Heart left ventricle (tissue), 16 donors: ENCODE measurements at regions of chr10 and their contacts with region 1.

Region 1: GRCh38 chr10:87861953-87862678 is 1.2 kb downstream of the KLLN start:
- DNase-seq: peak; percentile 97 to 98 (median 98)
- ATAC-seq: peak; percentile 88 to 92 (median 91)
- H3K4me3 ChIP-seq: peak overlapping the region; percentile 63 to 95 (median 80)
- H3K27ac ChIP-seq: peak overlapping the region; percentile 95 to 99 (median 97)
- H3K4me1 ChIP-seq: peaks cover 0 to 24% (median 14%) of the 10 kb centered on the region in 12 donors
- H3K27me3 ChIP-seq: no peaks in the 10 kb centered on the region
- CTCF ChIP-seq: no peak
- POLR2A ChIP-seq: peak in 1 of 2 donors; percentile 58

Region 2: DNA sequence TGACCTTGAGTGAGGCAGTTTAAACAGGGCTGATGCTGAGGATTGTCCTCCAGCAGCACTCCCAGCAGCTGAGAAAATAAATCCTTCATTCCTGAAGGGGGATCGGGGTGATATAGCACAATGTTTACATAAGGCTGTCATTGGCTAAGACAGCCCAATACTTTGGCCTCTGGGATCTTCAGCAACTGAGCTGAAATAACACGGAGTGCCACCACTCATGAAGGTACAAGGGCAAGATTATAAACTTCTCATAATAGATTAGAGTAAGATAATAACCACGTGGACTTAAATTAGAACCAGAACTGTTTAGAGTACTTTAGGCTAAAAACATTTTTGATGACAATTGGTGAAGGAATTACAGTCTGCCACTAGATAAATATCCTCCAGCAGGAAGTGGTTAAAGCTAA is 272.5 kb before region 1 on chr10:
- intact Hi-C with region 1: no loop called
- DNase-seq: no peak
- ATAC-seq: no peak
- H3K4me3 ChIP-seq: no peak overlapping the region
- H3K27ac ChIP-seq: no peak overlapping the region
- H3K4me1 ChIP-seq: peaks cover 0 to 5% (median 0%) of the 10 kb centered on the region in 12 donors
- H3K27me3 ChIP-seq: no peaks in the 10 kb centered on the region
- CTCF ChIP-seq: no peak
- POLR2A ChIP-seq: no peak

Region 3: DNA sequence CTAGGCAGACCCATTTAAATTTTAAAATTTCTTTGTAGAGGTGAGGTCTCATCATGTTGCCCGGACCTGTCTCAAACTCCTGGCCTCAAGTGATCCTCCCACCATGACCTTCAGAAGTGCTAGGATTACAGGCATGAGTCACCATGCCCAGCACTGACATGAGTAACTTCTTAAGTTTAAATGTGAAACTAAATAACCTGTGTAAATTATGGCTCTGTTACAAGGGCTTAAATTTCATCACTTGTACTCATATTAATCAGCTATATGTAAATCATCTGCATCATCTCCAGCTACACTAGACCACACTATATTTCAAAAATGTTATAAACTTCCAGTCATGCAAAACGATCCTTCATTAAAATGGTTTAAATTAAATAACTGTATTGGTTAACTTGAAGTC is 100.2 kb before region 1 on chr10:
- intact Hi-C with region 1: no loop called
- DNase-seq: no peak
- ATAC-seq: peak in 3 of 4 donors; percentile 42 to 59 (median 49)
- H3K4me3 ChIP-seq: no peak overlapping the region
- H3K27ac ChIP-seq: no peak overlapping the region
- H3K4me1 ChIP-seq: peaks cover 0 to 16% (median 4%) of the 10 kb centered on the region in 12 donors
- H3K27me3 ChIP-seq: no peaks in the 10 kb centered on the region
- CTCF ChIP-seq: no peak
- POLR2A ChIP-seq: no peak

Region 4: DNA sequence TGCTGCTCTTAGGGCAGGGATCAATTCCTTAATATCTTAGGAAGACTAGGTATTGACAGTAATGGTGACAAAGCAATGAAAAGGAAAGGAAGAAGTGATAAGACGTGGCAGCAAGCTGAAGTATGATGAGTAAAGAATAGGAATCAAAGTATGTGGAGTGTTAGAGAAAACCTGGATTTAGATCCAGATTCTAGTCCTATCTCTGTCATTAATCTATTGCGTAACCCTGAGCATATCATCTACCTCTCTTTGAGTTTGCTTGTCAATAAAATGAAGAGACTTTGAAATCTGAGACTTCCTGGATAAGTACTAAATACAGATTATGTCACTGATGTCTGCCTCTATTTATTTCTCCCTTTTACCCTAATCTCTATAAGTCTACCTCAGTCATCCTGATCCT is 90.5 kb after region 1 on chr10:
- intact Hi-C with region 1: loop called in 2 of 10 experiments (anchors 10 kb)
- DNase-seq: no peak
- ATAC-seq: no peak
- H3K4me3 ChIP-seq: no peak overlapping the region
- H3K27ac ChIP-seq: no peak overlapping the region
- H3K4me1 ChIP-seq: peaks cover 0 to 20% (median 0%) of the 10 kb centered on the region in 12 donors
- H3K27me3 ChIP-seq: no peaks in the 10 kb centered on the region
- CTCF ChIP-seq: no peak
- POLR2A ChIP-seq: no peak

Region 5: GRCh38 chr10:88064608-88065382 is 202.7 kb after region 1 on chr10:
- intact Hi-C with region 1: loop called in 1 of 10 experiments (anchors 2 kb)
- DNase-seq: peak; percentile 60 to 86 (median 73)
- ATAC-seq: peak; percentile 51 to 69 (median 58)
- H3K4me3 ChIP-seq: no peak overlapping the region
- H3K27ac ChIP-seq: peak overlapping the region in 8 of 12 donors; percentile 7 to 78 (median 20)
- H3K4me1 ChIP-seq: peaks cover 10 to 79% (median 39%) of the 10 kb centered on the region in 12 donors
- H3K27me3 ChIP-seq: no peaks in the 10 kb centered on the region
- CTCF ChIP-seq: no peak
- POLR2A ChIP-seq: no peak

Region 6: GRCh38 chr10:88243836-88244730 is 382.0 kb after region 1 on chr10:
- intact Hi-C with region 1: loop called in 6 of 10 experiments (anchors 2 to 10 kb)
- DNase-seq: peak; percentile 84 to 90 (median 88)
- ATAC-seq: peak; percentile 89 to 97 (median 92)
- H3K4me3 ChIP-seq: peak overlapping the region in 9 of 12 donors; percentile 9 to 39 (median 28)
- H3K27ac ChIP-seq: peak overlapping the region; percentile 76 to 90 (median 84)
- H3K4me1 ChIP-seq: peaks cover 6 to 57% (median 40%) of the 10 kb centered on the region in 12 donors
- H3K27me3 ChIP-seq: no peaks in the 10 kb centered on the region
- CTCF ChIP-seq: no peak
- POLR2A ChIP-seq: no peak

Region 7: DNA sequence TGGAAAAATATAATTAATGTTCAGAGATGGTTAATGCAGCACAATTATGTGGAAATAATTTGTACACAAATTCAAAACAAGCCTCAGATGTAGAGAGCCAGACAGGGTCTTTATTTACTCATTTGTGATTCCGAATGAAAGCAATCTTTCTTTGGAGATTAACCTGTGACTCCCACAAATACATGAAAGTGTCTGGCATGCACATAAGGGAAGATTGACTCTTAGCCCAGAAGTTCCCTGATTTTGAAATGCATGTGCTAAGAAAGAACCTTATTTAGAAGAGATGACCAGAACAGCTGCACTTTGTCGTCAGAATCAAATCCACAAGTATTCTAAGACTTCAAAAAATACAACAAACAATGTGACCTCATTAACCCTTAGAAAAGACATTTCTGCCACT is 675.9 kb after region 1 on chr10:
- intact Hi-C with region 1: loop called in 1 of 10 experiments (anchors 5 kb)
- DNase-seq: no peak
- ATAC-seq: peak in 2 of 4 donors; percentile 35 to 48
- H3K4me3 ChIP-seq: no peak overlapping the region
- H3K27ac ChIP-seq: peak overlapping the region in 6 of 12 donors; percentile 6 to 59 (median 22)
- H3K4me1 ChIP-seq: peaks cover 0 to 23% (median 1%) of the 10 kb centered on the region in 12 donors
- H3K27me3 ChIP-seq: no peaks in the 10 kb centered on the region
- CTCF ChIP-seq: no peak
- POLR2A ChIP-seq: no peak